ENCODE measurements at regions of chr14 and their contacts with region 1.

Region 1: GRCh38 chr14:77320238-77320935 is at the start of gene POMT2:
- DNase-seq: peak; percentile 63
- H3K4me3 ChIP-seq: peak within 1 kb of the TSS; percentile 91
- H3K27ac ChIP-seq: peak within 1 kb of the TSS; percentile 95
- H3K27me3 ChIP-seq: no peaks in the 10 kb centered on the region
- CTCF ChIP-seq: peak; percentile 34; the same call in 1 of the 2 replicates
- polyA plus RNA-seq, gene POMT2: 11.0 and 17.2 TPM in 2 replicates

Region 2: DNA sequence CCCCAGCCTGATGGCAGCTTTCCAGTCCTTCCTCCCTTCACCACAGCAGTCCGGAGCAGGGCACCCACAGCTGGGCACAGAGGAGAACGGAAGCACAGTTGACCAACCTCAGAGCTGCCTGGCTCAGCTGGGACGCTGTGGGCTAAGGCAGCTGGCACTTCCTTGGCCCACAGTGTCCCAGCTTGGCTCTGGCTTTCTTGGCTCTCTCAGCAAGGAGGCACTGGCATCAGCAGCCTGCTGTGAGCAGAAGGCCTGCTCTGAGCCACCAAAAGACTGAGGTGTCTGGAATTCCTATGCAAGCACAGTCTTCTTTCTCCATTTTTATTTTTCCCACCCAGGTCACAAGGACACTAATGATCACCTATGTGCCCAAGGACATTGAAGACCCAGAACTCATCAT is 82.0 kb before region 1 on chr14:
- CTCF ChIA-PET with region 1: no interaction called
- POLR2A ChIA-PET with region 1: no interaction called
- DNase-seq: no peak
- H3K4me3 ChIP-seq: no peak overlapping the region
- H3K27ac ChIP-seq: no peak overlapping the region
- H3K27me3 ChIP-seq: no peaks in the 10 kb centered on the region
- CTCF ChIP-seq: no peak

Region 3: DNA sequence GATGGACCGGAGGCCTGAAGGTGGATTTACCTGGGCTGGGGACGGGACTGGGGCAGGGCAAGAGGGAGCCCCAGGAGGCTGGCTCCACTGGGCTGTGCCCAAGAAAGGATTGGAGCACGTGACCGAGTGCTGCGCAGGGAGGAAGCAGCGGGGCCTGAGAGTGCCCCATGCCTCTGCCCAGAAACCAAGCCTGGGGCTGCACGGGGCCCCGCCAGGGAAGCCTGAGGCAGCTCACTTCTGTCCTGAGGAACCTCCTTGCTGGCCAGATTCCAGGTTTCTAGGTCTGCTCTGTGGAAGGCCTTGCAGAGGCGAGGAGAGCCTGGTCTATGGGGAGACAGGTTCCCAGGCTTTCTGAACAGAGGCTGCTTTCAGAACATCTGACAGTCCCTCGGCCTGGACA is 59.8 kb before region 1 on chr14:
- CTCF ChIA-PET with region 1: no interaction called
- POLR2A ChIA-PET with region 1: no interaction called
- DNase-seq: no peak
- H3K4me3 ChIP-seq: no peak overlapping the region
- H3K27ac ChIP-seq: no peak overlapping the region
- H3K27me3 ChIP-seq: peaks cover 31% of the 10 kb centered on the region
- CTCF ChIP-seq: no peak

Region 4: DNA sequence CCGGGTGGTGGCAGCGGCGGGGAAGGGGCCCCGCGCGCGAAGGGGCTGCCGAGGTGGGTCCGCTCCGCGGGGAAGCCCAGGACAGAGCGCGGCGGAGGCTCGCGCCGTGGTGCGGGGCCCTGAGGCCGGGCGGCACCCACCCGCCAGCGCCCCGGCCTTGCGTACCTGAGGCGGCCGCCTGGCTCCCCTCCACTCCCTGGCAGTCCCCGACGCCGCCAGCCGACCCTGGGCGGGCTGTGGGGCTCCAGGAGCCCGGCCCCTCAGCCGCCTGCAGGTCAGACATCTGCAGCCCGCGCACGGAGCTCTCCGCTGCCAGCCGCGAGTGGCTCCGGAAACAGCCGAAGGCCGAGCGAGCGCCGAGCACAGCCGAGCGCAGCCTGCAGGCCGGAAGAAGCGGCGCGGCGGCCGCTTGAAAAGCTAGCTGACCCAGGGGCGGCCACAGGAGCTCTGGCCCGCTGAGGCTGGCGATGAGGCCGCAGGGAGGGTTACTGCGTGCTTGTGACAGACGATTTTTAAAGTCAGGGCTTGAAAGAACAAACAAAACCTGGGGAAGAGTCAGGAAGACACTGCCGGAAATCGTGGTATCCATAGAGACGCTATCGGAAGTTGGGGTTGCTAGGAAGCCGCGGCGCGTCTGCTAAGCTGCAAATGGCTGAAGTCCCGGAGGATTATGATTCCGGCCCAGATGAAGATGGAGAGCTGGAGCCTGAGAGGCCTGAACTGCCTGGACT is 56.5 kb after region 1 on chr14 and contains the starts of genes SAMD15 and TMED8:
- CTCF ChIA-PET with region 1: interaction called, 12 read pairs
- POLR2A ChIA-PET with region 1: interaction called, 24 read pairs
- DNase-seq: peak; percentile 37
- H3K4me3 ChIP-seq: peak within 1 kb of the TSS; percentile 86
- H3K27ac ChIP-seq: peak within 1 kb of the TSS; percentile 62
- H3K27me3 ChIP-seq: no peaks in the 10 kb centered on the region
- CTCF ChIP-seq: peak; percentile 31
- polyA plus RNA-seq, gene SAMD15: 0.66 and 0.72 TPM in 2 replicates
- polyA plus RNA-seq, gene TMED8: 4.5 and 5.7 TPM in 2 replicates